Ascending aorta (tissue), 2 donors: ENCODE measurements at regions of chr7 and their contacts with region 1.

Region 1: DNA sequence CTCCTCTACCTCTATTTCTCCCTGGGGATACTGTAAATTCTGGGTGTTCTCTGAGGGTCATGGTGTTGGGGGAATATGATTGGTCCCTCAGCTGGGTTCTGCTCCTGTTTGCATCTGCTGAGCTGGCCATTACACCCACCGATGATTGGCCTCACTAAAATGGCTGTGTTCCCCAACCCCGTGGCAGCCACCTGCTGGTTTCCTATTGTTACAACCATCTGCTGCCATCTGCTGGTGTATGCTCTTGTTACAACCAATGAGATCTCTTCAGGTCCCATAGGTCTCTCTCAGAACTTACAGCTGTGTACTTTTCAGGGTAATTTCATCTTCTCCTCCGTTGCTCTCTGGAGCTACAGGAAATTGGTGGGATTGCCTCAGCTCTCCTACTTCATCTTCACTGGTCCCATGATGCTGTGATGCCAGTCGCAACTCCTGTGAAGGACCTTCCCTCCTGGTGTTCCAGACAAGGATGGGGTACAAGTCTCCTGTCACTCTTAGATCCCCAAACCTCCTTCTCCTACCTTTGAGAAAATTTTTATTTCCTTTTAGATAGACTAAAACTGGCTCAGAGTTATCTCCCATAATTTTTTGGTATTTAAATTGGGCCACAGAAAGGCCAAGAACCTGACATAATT is 303.5 kb upstream of the SMIM30 start:
- DNase-seq: peak; percentile 14 to 92
- H3K4me3 ChIP-seq: no peak overlapping the region
- H3K27ac ChIP-seq: no peak overlapping the region
- H3K4me1 ChIP-seq: no peaks in the 10 kb centered on the region
- H3K27me3 ChIP-seq: no peaks in the 10 kb centered on the region
- CTCF ChIP-seq: peak; percentile 66 to 81 (median 74)

Region 2: GRCh38 chr7:112550468-112551060 is 871.2 kb before region 1 on chr7:
- intact Hi-C with region 1: loop called (anchors 5 kb)
- DNase-seq: no peak
- H3K4me3 ChIP-seq: no peak overlapping the region
- H3K27ac ChIP-seq: no peak overlapping the region
- H3K4me1 ChIP-seq: no peaks in the 10 kb centered on the region
- H3K27me3 ChIP-seq: no peaks in the 10 kb centered on the region
- CTCF ChIP-seq: peak; percentile 51 to 70 (median 61)

Region 3: GRCh38 chr7:113015032-113015645 is 406.7 kb before region 1 on chr7:
- intact Hi-C with region 1: loop called (anchors 2 kb)
- DNase-seq: no peak
- H3K4me3 ChIP-seq: no peak overlapping the region
- H3K27ac ChIP-seq: no peak overlapping the region
- H3K4me1 ChIP-seq: no peaks in the 10 kb centered on the region
- H3K27me3 ChIP-seq: no peaks in the 10 kb centered on the region
- CTCF ChIP-seq: peak; percentile 5 to 34 (median 23)

Region 4: GRCh38 chr7:113086431-113086888 is 335.4 kb before region 1 on chr7 and contains the start of gene GPR85:
- intact Hi-C with region 1: loop called (anchors 5 kb)
- DNase-seq: peak; percentile 7 to 73
- H3K4me3 ChIP-seq: peak within 1 kb of the TSS; percentile 54 to 67
- H3K27ac ChIP-seq: peak within 1 kb of the TSS; percentile 54 to 61
- H3K4me1 ChIP-seq: peaks cover 0 to 3% of the 10 kb centered on the region in 2 donors
- H3K27me3 ChIP-seq: no peaks in the 10 kb centered on the region
- CTCF ChIP-seq: no peak
- total RNA-seq, gene GPR85: not detected

Region 5: GRCh38 chr7:113159746-113160339 is 262.0 kb before region 1 on chr7:
- intact Hi-C with region 1: loop called (anchors 5 kb)
- DNase-seq: no peak
- H3K4me3 ChIP-seq: no peak overlapping the region
- H3K27ac ChIP-seq: no peak overlapping the region
- H3K4me1 ChIP-seq: no peaks in the 10 kb centered on the region
- H3K27me3 ChIP-seq: no peaks in the 10 kb centered on the region
- CTCF ChIP-seq: peak in 2 of 3 experiments; percentile 26 to 34

Region 6: DNA sequence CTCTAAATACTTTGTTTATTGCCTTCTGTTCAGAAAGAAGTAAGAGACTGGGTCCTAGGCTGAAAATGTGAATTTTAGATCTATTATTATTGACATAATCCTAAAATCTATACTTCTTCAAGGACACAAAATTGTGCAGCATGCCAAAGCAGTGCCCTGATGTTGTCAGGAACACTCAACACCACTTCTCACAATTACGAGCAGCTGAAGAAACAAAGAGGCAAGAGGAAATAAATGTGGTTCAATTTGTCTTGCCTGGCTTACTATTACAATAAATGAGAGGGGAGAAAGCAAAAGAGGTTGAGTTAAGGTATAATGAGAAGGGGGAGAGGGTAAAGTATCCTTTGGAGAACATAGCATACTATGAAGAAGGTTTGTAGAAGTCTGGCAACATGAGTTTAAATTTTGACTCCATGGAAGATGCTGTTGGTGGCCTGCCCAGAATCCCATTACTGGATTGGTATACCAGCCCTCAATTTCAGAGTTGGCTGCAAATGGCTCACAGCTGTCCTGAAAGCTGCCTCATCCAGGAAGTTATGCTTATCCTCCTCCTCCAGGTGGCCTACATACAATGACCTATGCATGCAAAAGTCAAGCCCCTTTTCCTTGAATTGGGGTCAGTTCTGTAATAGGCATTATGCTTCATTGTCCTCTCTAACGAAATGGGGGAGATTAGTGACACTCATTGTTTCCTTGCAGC is 28.8 kb before region 1 on chr7:
- intact Hi-C with region 1: no loop called
- DNase-seq: no peak
- H3K4me3 ChIP-seq: no peak overlapping the region
- H3K27ac ChIP-seq: no peak overlapping the region
- H3K4me1 ChIP-seq: no peaks in the 10 kb centered on the region
- H3K27me3 ChIP-seq: no peaks in the 10 kb centered on the region
- CTCF ChIP-seq: no peak

Region 7: GRCh38 chr7:113404245-113404644 is 17.6 kb before region 1 on chr7:
- intact Hi-C with region 1: no loop called
- DNase-seq: no peak
- H3K4me3 ChIP-seq: no peak overlapping the region
- H3K27ac ChIP-seq: no peak overlapping the region
- H3K4me1 ChIP-seq: no peaks in the 10 kb centered on the region
- H3K27me3 ChIP-seq: no peaks in the 10 kb centered on the region
- CTCF ChIP-seq: no peak

Region 8: GRCh38 chr7:113698556-113699220 is 276.9 kb after region 1 on chr7:
- intact Hi-C with region 1: loop called (anchors 10 kb)
- DNase-seq: no peak
- H3K4me3 ChIP-seq: no peak overlapping the region
- H3K27ac ChIP-seq: no peak overlapping the region
- H3K4me1 ChIP-seq: no peaks in the 10 kb centered on the region
- H3K27me3 ChIP-seq: no peaks in the 10 kb centered on the region
- CTCF ChIP-seq: peak; percentile 26 to 75 (median 70)

Region 9: GRCh38 chr7:114051871-114052331 is 630.1 kb after region 1 on chr7:
- intact Hi-C with region 1: no loop called
- DNase-seq: no peak
- H3K4me3 ChIP-seq: no peak overlapping the region
- H3K27ac ChIP-seq: no peak overlapping the region
- H3K4me1 ChIP-seq: no peaks in the 10 kb centered on the region
- H3K27me3 ChIP-seq: no peaks in the 10 kb centered on the region
- CTCF ChIP-seq: no peak